Right cardiac atrium (tissue), 5 donors: ENCODE measurements at regions of chr1 and their contacts with region 1.

Region 1: GRCh38 chr1:247119600-247120407 is 15.6 kb upstream of the ZNF669 start:
- DNase-seq: no peak
- ATAC-seq: peak; percentile 22 to 31
- H3K4me3 ChIP-seq: no peak overlapping the region
- H3K27ac ChIP-seq: no peak overlapping the region
- H3K4me1 ChIP-seq: no peaks in the 10 kb centered on the region
- H3K27me3 ChIP-seq: no peaks in the 10 kb centered on the region

Region 2: DNA sequence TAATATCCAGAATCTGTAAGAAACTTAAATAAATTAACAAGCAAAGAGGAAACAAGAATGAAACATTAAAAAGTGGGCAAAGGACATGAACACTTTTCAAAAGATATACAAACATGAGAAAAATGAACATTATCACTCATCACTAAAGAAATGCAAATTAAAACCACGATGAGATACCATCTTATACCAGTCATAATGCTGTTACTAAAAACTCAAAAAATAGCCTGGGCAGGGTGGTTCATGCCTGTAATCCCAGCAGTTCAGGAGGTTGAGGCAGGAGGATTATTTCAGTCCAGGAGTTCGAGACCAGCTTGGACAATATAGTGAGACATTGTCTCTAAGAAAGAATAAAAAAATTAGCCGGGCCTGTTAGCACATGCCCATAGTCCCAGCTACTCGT is 45.9 kb after region 1 on chr1:
- intact Hi-C with region 1: loop called in 2 of 4 experiments (anchors 5 kb)
- DNase-seq: no peak
- ATAC-seq: no peak
- H3K4me3 ChIP-seq: no peak overlapping the region
- H3K27ac ChIP-seq: no peak overlapping the region
- H3K4me1 ChIP-seq: no peaks in the 10 kb centered on the region
- H3K27me3 ChIP-seq: no peaks in the 10 kb centered on the region

Region 3: DNA sequence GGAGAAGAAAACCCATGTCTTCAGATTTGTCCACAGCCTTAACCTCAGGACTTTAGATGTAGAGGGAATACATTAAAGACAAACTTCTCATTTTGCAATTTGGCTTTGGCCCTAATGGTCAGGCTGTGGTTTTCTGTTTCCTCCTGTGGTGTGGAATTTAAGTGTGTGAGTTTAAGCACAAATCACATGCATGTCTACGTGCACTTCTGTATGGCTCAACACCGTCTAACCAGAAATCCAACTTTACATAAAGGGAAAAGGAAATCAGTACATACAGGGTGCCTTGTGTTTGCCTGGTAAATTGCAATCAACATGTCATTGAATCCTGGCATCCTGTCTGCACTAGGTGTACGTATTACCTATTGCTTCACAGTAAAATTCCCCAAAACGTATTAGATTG is 53.2 kb after region 1 on chr1:
- intact Hi-C with region 1: loop called in 2 of 4 experiments (anchors 5 kb)
- DNase-seq: no peak
- ATAC-seq: no peak
- H3K4me3 ChIP-seq: no peak overlapping the region
- H3K27ac ChIP-seq: no peak overlapping the region
- H3K4me1 ChIP-seq: no peaks in the 10 kb centered on the region
- H3K27me3 ChIP-seq: no peaks in the 10 kb centered on the region